ENCODE measurements at regions of chr6 and their contacts with region 1.

Region 1: GRCh38 chr6:107982486-107982885 is 24.5 kb upstream of the SEC63 start:
- H3K4me3 ChIP-seq: no peak overlapping the region
- H3K27ac ChIP-seq: no peak overlapping the region
- H3K4me1 ChIP-seq: no peaks in the 10 kb centered on the region
- CTCF ChIP-seq: no peak

Region 2: DNA sequence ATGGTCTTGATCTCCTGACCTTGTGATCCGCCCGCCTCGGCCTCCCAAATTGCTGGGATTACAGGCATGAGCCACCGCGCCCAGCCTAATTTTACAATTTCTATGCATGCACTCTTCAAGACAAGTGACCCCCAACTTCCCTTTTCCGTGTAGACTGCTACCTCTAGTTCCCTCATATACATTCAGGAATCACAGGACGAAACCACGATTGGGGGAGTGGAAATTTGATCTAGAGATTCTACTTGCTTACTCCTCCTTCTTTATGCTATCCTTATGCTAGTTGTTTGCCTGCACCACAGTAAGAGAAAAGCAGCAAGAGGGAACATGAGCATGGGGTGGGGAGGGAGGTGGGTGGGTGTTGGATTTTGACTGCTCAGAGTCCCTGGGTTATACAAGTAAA is 57.2 kb after region 1 on chr6:
- CTCF ChIA-PET with region 1: interaction called, 20 read pairs
- POLR2A ChIA-PET with region 1: no interaction called
- H3K4me3 ChIP-seq: no peak overlapping the region
- H3K27ac ChIP-seq: no peak overlapping the region
- H3K4me1 ChIP-seq: no peaks in the 10 kb centered on the region
- CTCF ChIP-seq: no peak

Region 3: GRCh38 chr6:108526739-108527174 is 544.3 kb after region 1 on chr6:
- CTCF ChIA-PET with region 1: interaction called, 30 read pairs
- POLR2A ChIA-PET with region 1: no interaction called
- H3K4me3 ChIP-seq: no peak overlapping the region
- H3K27ac ChIP-seq: no peak overlapping the region
- H3K4me1 ChIP-seq: no peaks in the 10 kb centered on the region
- CTCF ChIP-seq: no peak; the same call in 1 of the 2 replicates